WTC11 (cell line): ENCODE measurements at regions of chr16 and their contacts with region 1.

Region 1: GRCh38 chr16:66961065-66961744 is at the start of gene CES3:
- DNase-seq: peak; percentile 91
- ATAC-seq: peak; percentile 100
- H3K4me3 Mint-ChIP-seq: peak within 1 kb of the TSS; percentile 66
- H3K27ac Mint-ChIP-seq: peak within 1 kb of the TSS; percentile 56
- H3K4me1 Mint-ChIP-seq: peaks cover 9% of the 10 kb centered on the region
- H3K27me3 Mint-ChIP-seq: peaks cover 8% of the 10 kb centered on the region; the same call in 1 of the 2 replicates
- CTCF ChIP-seq: peak; percentile 72
- total RNA-seq, gene CES3: 3.3 to 6.0 TPM (median 5.7 TPM) in 3 replicates

Region 2: GRCh38 chr16:66886346-66886745 is 74.9 kb before region 1 on chr16:
- CTCF ChIA-PET with region 1: no interaction called
- POLR2A ChIA-PET with region 1: no interaction called
- DNase-seq: no peak
- ATAC-seq: no peak
- H3K4me3 Mint-ChIP-seq: no peak overlapping the region
- H3K27ac Mint-ChIP-seq: no peak overlapping the region
- H3K4me1 Mint-ChIP-seq: peaks cover 19% of the 10 kb centered on the region
- H3K27me3 Mint-ChIP-seq: no peaks in the 10 kb centered on the region
- CTCF ChIP-seq: no peak

Region 3: GRCh38 chr16:66977341-66978113 is 16.3 kb after region 1 on chr16:
- CTCF ChIA-PET with region 1: interaction called, 39 read pairs
- POLR2A ChIA-PET with region 1: interaction called, 3 read pairs
- DNase-seq: peak; percentile 95
- ATAC-seq: peak; percentile 95
- H3K4me3 Mint-ChIP-seq: no peak overlapping the region
- H3K27ac Mint-ChIP-seq: no peak overlapping the region
- H3K4me1 Mint-ChIP-seq: peaks cover 6% of the 10 kb centered on the region
- H3K27me3 Mint-ChIP-seq: no peaks in the 10 kb centered on the region; the same call in 1 of the 2 replicates
- CTCF ChIP-seq: peak; percentile 96

Region 4: GRCh38 chr16:67150833-67151396 is 189.7 kb after region 1 on chr16 and contains the start of gene B3GNT9:
- CTCF ChIA-PET with region 1: interaction called, 51 read pairs
- POLR2A ChIA-PET with region 1: interaction called, 3 read pairs
- DNase-seq: peak; percentile 77
- ATAC-seq: peak; percentile 36
- H3K4me3 Mint-ChIP-seq: peak within 1 kb of the TSS; percentile 75
- H3K27ac Mint-ChIP-seq: no peak within 1 kb of the TSS
- H3K4me1 Mint-ChIP-seq: peaks cover 8% of the 10 kb centered on the region
- H3K27me3 Mint-ChIP-seq: peaks cover 58% of the 10 kb centered on the region
- CTCF ChIP-seq: no peak
- total RNA-seq, gene B3GNT9: 6.4 to 7.8 TPM (median 7.6 TPM) in 3 replicates

Region 5: GRCh38 chr16:67183627-67184328 is 222.6 kb after region 1 on chr16 and contains the start of gene MATCAP1:
- CTCF ChIA-PET with region 1: interaction called, 26 read pairs
- POLR2A ChIA-PET with region 1: no interaction called
- DNase-seq: peak; percentile 94
- ATAC-seq: peak; percentile 90
- H3K4me3 Mint-ChIP-seq: peak within 1 kb of the TSS; percentile 82
- H3K27ac Mint-ChIP-seq: no peak within 1 kb of the TSS
- H3K4me1 Mint-ChIP-seq: peaks cover 20% of the 10 kb centered on the region
- H3K27me3 Mint-ChIP-seq: peaks cover 31% of the 10 kb centered on the region
- CTCF ChIP-seq: no peak
- total RNA-seq, gene MATCAP1: 40.8 to 54.3 TPM (median 50.5 TPM) in 3 replicates

Region 6: DNA sequence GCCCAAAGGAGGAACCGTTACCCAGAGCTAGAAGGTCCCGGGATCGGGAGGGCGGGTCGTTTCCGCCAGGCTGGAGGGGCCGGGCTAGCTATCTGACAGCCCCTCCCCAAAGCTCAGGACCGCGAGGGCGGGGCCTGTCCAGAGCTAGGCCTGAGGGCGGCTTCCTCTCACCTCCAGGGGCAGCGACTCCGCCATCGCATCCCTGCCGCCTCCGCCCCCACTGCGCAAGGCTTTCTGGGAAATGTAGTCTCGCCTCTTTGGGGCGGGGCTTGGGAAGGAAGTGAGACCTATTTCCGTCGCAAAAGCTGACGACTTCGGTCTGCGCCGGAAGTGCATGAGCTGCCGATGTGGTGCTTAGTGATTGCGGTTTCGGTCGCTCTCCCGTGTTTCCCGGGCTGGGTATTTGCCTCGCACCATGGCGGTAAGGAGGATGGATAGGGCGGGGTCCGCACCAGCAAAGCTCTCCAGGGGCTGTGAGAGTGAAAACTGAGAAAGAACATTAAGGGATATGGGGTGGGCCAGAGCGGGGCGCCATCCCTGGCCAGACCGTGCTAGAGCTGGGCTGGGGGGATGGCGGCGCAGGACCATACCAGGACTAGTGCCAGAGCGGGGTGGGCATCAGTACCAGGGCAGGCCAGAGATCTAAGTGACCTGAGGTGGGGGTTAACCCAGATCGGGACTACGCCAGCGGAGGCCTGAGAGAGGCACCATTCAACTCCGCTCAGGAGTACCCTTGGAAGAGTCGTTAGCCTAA is 265.8 kb after region 1 on chr16 and contains the start of gene TMEM208:
- CTCF ChIA-PET with region 1: interaction called, 13 read pairs
- POLR2A ChIA-PET with region 1: no interaction called
- DNase-seq: peak; percentile 100
- ATAC-seq: peak; percentile 99
- H3K4me3 Mint-ChIP-seq: peak within 1 kb of the TSS; percentile 97
- H3K27ac Mint-ChIP-seq: peak within 1 kb of the TSS; percentile 98
- H3K4me1 Mint-ChIP-seq: peaks cover 15% of the 10 kb centered on the region
- H3K27me3 Mint-ChIP-seq: peaks cover 28% of the 10 kb centered on the region
- CTCF ChIP-seq: no peak
- total RNA-seq, gene TMEM208: 37.4 to 48.4 TPM (median 43.1 TPM) in 3 replicates

Region 7: GRCh38 chr16:67301080-67301782 is 340.0 kb after region 1 on chr16:
- CTCF ChIA-PET with region 1: no interaction called
- POLR2A ChIA-PET with region 1: no interaction called
- DNase-seq: no peak
- ATAC-seq: no peak
- H3K4me3 Mint-ChIP-seq: no peak overlapping the region
- H3K27ac Mint-ChIP-seq: no peak overlapping the region
- H3K4me1 Mint-ChIP-seq: no peaks in the 10 kb centered on the region
- H3K27me3 Mint-ChIP-seq: peaks cover 13% of the 10 kb centered on the region
- CTCF ChIP-seq: no peak